Endothelial cell of umbilical vein (primary cell): ENCODE measurements at regions of chr19 and their contacts with region 1.

Region 1: GRCh38 chr19:19488875-19489690 is 26.3 kb downstream of the TSSK6 start:
- DNase-seq: peak; percentile 86
- H3K4me3 ChIP-seq: no peak overlapping the region
- H3K27ac ChIP-seq: peak overlapping the region; percentile 76
- H3K4me1 ChIP-seq: peaks cover 29% of the 10 kb centered on the region
- H3K27me3 ChIP-seq: no peaks in the 10 kb centered on the region
- CTCF ChIP-seq: no peak
- POLR2A ChIP-seq: no peak

Region 2: DNA sequence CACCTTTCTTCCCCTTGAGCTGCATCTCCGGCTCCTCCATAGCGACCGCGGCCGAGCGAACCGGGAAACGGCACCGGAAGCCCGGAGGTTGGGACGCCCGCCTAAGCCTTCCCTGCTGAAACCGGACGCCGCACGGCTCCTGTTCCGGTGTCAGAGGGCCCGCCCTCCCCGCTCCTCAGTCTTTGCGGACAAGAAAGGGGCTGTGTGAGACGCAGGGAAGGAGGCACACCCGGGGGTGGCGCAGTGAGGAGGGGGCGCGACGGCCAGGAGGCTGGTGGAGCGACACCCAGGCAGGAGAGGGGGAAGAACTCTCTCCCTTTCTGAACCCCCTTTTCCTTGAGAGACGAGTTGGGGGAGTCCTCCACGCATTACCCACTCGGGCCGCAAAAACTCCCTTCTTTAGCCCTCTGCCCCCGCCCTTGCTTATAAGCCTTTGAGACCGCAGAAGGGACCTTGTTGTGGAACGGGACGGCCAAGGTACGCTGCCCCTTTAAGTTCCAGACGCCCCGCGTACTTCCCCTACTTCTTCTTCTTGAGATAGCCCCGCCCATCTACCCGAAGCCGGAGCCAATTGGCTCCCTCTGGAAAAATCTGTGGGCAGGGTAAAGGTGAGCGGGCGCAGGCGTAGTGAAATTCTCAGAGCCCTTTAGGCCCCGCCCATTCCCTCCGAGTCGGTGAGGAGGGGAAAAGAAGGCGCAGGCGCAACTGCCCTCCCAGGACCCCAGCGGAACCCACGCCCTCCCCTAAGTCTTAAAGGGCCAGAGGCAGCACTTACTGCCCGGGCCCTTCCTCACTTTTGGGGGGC is 296.8 kb before region 1 on chr19 and contains the starts of genes BORCS8 and RFXANK:
- CTCF ChIA-PET with region 1: no interaction called
- POLR2A ChIA-PET with region 1: no interaction called
- dilution Hi-C with region 1: no loop called
- intact Hi-C with region 1: loop called (anchors 10 kb)
- DNase-seq: peak; percentile 100
- H3K4me3 ChIP-seq: peak within 1 kb of the TSS; percentile 78 to 100 (median 98)
- H3K27ac ChIP-seq: peak within 1 kb of the TSS; percentile 98
- H3K4me1 ChIP-seq: peaks cover 15% of the 10 kb centered on the region
- H3K27me3 ChIP-seq: no peaks in the 10 kb centered on the region
- CTCF ChIP-seq: no peak
- POLR2A ChIP-seq: peak; percentile 52
- total RNA-seq, gene BORCS8: 35.6 and 45.8 TPM in 2 replicates
- total RNA-seq, gene RFXANK: 105 and 118 TPM in 2 replicates

Region 3: GRCh38 chr19:19342756-19343322 is 146.2 kb before region 1 on chr19:
- CTCF ChIA-PET with region 1: interaction called, 31 read pairs
- POLR2A ChIA-PET with region 1: no interaction called
- dilution Hi-C with region 1: no loop called
- intact Hi-C with region 1: no loop called
- DNase-seq: peak; percentile 43
- H3K4me3 ChIP-seq: no peak overlapping the region
- H3K27ac ChIP-seq: no peak overlapping the region
- H3K4me1 ChIP-seq: no peaks in the 10 kb centered on the region
- H3K27me3 ChIP-seq: no peaks in the 10 kb centered on the region
- CTCF ChIP-seq: peak; percentile 87 to 98
- POLR2A ChIP-seq: no peak

Region 4: DNA sequence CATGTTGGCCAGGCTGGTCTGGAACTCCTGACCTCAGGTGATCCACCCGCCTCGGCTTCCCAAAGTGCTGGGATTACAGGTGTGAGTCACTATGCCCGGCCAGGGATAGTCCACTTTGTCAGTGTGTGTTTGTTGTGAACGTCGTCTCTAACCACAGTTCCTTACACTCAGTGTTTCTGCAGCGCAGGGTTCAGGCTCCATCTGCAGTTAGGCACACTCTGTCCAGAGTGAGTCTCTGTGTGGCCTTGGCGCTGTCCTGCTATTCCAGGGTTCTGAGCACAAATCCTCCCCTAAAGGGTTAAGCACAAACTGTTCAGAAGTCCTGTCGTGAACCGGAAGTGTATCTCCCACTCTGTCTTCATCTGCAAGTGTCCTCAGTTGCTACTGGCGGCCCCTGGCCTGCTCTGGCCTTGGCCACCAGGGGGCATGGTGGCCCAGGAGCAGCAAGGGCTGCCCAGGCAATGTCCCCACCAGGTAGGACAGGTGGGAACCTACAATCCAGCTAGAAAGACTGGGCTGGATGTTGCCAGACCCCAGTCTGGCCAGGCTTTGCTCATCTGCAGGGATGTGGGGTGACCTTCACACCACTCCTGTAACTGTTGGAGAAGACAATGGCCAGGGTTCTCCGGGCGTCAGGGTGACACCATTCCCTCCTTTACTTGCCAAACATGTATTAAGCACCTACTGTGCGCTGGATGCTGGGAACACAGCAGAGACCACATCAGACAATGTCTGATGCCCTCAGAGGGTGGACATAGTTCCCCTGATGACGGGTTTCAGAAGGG is 122.3 kb before region 1 on chr19:
- CTCF ChIA-PET with region 1: interaction called, 127 read pairs
- POLR2A ChIA-PET with region 1: no interaction called
- dilution Hi-C with region 1: no loop called
- intact Hi-C with region 1: loop called (anchors 1 kb)
- DNase-seq: peak; percentile 67
- H3K4me3 ChIP-seq: no peak overlapping the region
- H3K27ac ChIP-seq: no peak overlapping the region
- H3K4me1 ChIP-seq: peaks cover 8% of the 10 kb centered on the region
- H3K27me3 ChIP-seq: no peaks in the 10 kb centered on the region
- CTCF ChIP-seq: peak; percentile 96 to 98
- POLR2A ChIP-seq: no peak

Region 5: DNA sequence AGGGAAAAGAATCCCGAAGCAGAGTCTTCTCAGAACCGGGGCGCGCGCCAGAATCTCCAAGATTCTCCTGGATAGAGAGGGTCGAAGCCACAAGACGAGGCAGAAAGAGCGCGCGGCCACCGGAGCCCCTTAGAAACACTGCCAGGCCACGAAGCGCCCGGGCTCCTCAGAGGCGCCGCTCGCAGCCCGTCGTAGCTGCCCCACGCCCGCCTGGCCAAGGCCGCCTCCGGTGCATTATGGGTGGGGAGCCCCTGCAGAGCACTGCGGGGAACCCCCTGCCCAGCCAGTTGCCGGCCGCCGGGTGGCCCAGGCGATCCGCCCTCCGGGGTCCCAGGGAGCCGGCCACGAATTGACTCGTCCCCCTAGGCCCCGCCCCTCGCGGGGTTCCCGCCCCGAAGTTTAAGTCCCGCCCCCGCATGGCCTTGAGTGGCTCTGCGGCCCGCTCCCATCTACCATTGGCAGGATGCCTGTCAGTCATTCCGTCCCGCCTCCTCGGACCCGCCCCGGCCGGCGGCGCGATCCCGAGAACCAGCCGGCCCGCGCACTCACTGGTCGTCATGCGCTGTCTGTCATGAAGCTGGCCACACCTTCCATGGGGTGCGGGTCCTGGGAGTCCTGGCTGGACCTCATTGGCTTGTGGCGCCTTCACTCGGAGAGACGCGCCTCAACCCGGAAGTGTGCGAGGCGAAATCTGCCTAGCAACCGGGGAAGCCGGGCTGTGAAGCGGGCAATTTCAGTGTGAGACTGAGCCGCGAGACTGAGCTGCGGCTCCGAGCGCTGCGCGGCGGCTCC is 103.8 kb before region 1 on chr19:
- CTCF ChIA-PET with region 1: interaction called, 12 read pairs
- POLR2A ChIA-PET with region 1: interaction called, 3 read pairs
- dilution Hi-C with region 1: no loop called
- intact Hi-C with region 1: loop called (anchors 1 kb)
- DNase-seq: peak; percentile 100
- H3K4me3 ChIP-seq: peak overlapping the region; percentile 53 to 89 (median 74)
- H3K27ac ChIP-seq: peak overlapping the region; percentile 92
- H3K4me1 ChIP-seq: peaks cover 26% of the 10 kb centered on the region
- H3K27me3 ChIP-seq: no peaks in the 10 kb centered on the region
- CTCF ChIP-seq: peak in 1 of 2 donors; percentile 15
- POLR2A ChIP-seq: peak; percentile 84

Region 6: GRCh38 chr19:19459707-19460251 is 29.3 kb before region 1 on chr19:
- CTCF ChIA-PET with region 1: interaction called, 10 read pairs
- POLR2A ChIA-PET with region 1: no interaction called
- dilution Hi-C with region 1: no loop called
- intact Hi-C with region 1: loop called (anchors 1 kb)
- DNase-seq: peak; percentile 73
- H3K4me3 ChIP-seq: peak overlapping the region in 1 of 3 experiments; percentile 6
- H3K27ac ChIP-seq: peak overlapping the region; percentile 91
- H3K4me1 ChIP-seq: peaks cover 67% of the 10 kb centered on the region
- H3K27me3 ChIP-seq: no peaks in the 10 kb centered on the region
- CTCF ChIP-seq: no peak
- POLR2A ChIP-seq: peak; percentile 22